H1 (cell line): ENCODE measurements at regions of chr12 and their contacts with region 1.

Region 1: GRCh38 chr12:14723763-14724162 is 27.4 kb upstream of the GUCY2C start:
- DNase-seq: no peak
- H3K4me3 ChIP-seq: no peak overlapping the region
- H3K27ac ChIP-seq: no peak overlapping the region
- H3K4me1 ChIP-seq: no peaks in the 10 kb centered on the region
- H3K27me3 ChIP-seq: no peaks in the 10 kb centered on the region
- CTCF ChIP-seq: peak; percentile 35 to 82 (median 82)
- EP300 ChIP-seq: no peak
- POLR2A ChIP-seq: no peak
- RAD21 ChIP-seq: peak; percentile 92 to 94

Region 2: DNA sequence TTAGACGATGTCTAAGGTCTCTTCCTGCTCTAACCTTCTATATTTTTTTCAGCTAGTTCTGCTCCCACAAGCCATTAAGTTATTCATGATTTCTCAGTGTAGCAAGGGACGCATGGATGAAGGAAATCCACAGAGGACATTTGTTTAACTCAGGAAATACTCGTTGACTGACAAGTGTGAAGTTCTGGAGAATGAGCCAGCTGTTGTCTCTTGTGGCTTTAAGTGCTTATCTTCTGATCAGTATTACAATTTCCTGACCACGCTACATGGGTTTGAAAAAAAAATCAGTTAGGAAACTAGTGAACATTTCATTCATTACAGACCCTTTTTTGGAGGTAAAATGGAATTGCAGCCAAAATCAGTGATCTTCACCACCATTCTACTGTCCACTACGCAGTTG is 80.5 kb before region 1 on chr12:
- CTCF ChIA-PET with region 1: no interaction called
- POLR2A ChIA-PET with region 1: no interaction called
- DNase-seq: no peak
- H3K4me3 ChIP-seq: no peak overlapping the region
- H3K27ac ChIP-seq: no peak overlapping the region
- H3K4me1 ChIP-seq: no peaks in the 10 kb centered on the region
- H3K27me3 ChIP-seq: no peaks in the 10 kb centered on the region; a peak in 1 of 7 replicates
- CTCF ChIP-seq: no peak
- EP300 ChIP-seq: no peak
- POLR2A ChIP-seq: no peak
- RAD21 ChIP-seq: no peak

Region 3: GRCh38 chr12:14663002-14663401 is 60.8 kb before region 1 on chr12:
- CTCF ChIA-PET with region 1: no interaction called
- POLR2A ChIA-PET with region 1: no interaction called
- DNase-seq: no peak
- H3K4me3 ChIP-seq: no peak overlapping the region
- H3K27ac ChIP-seq: no peak overlapping the region
- H3K4me1 ChIP-seq: peaks cover 0 to 3% (median 1%) of the 10 kb centered on the region in 4 experiments; a peak in 3 of 7 replicates
- H3K27me3 ChIP-seq: no peaks in the 10 kb centered on the region
- CTCF ChIP-seq: no peak
- EP300 ChIP-seq: no peak
- POLR2A ChIP-seq: no peak
- RAD21 ChIP-seq: no peak

Region 4: GRCh38 chr12:14741153-14741552 is 17.4 kb after region 1 on chr12:
- CTCF ChIA-PET with region 1: interaction called, 23 read pairs
- POLR2A ChIA-PET with region 1: no interaction called
- DNase-seq: no peak
- H3K4me3 ChIP-seq: no peak overlapping the region
- H3K27ac ChIP-seq: no peak overlapping the region
- H3K4me1 ChIP-seq: no peaks in the 10 kb centered on the region
- H3K27me3 ChIP-seq: no peaks in the 10 kb centered on the region
- CTCF ChIP-seq: no peak
- EP300 ChIP-seq: no peak
- POLR2A ChIP-seq: no peak
- RAD21 ChIP-seq: no peak

Region 5: GRCh38 chr12:14756334-14757143 is 32.8 kb after region 1 on chr12:
- CTCF ChIA-PET with region 1: interaction called, 17 read pairs
- POLR2A ChIA-PET with region 1: no interaction called
- DNase-seq: peak in 1 of 2 experiments; percentile 62
- H3K4me3 ChIP-seq: no peak overlapping the region
- H3K27ac ChIP-seq: no peak overlapping the region
- H3K4me1 ChIP-seq: peaks cover 0 to 2% (median 0%) of the 10 kb centered on the region in 4 experiments; a peak in 1 of 7 replicates
- H3K27me3 ChIP-seq: no peaks in the 10 kb centered on the region
- CTCF ChIP-seq: peak; percentile 42 to 71 (median 69)
- EP300 ChIP-seq: no peak
- POLR2A ChIP-seq: no peak
- RAD21 ChIP-seq: peak; percentile 19 to 48; a peak in 3 of 4 replicates

Region 6: DNA sequence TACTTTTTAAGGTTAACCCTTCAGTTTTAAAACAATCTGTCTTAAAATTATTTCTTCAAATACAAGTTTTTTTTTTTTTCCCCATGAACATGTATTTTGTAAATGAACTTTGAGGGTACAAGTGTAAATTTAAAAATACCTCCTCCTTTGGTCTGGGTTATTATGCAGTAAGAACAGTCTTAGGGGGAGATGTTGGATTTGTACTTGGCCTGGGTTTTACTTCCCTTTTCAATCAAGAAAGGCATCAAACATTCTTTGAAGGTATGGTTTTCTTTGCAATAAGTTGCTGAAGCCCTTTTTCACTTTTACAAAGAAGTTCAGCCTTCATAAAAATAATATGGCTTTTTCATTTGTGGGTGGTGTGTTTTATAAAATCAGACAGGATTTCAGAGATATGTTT is 59.0 kb after region 1 on chr12:
- CTCF ChIA-PET with region 1: interaction called, 10 read pairs
- POLR2A ChIA-PET with region 1: no interaction called
- DNase-seq: no peak
- H3K4me3 ChIP-seq: no peak overlapping the region
- H3K27ac ChIP-seq: no peak overlapping the region
- H3K4me1 ChIP-seq: no peaks in the 10 kb centered on the region
- H3K27me3 ChIP-seq: no peaks in the 10 kb centered on the region
- CTCF ChIP-seq: no peak
- EP300 ChIP-seq: no peak
- POLR2A ChIP-seq: no peak
- RAD21 ChIP-seq: no peak